ENCODE measurements at regions of chr7 and their contacts with region 1.

Region 1: DNA sequence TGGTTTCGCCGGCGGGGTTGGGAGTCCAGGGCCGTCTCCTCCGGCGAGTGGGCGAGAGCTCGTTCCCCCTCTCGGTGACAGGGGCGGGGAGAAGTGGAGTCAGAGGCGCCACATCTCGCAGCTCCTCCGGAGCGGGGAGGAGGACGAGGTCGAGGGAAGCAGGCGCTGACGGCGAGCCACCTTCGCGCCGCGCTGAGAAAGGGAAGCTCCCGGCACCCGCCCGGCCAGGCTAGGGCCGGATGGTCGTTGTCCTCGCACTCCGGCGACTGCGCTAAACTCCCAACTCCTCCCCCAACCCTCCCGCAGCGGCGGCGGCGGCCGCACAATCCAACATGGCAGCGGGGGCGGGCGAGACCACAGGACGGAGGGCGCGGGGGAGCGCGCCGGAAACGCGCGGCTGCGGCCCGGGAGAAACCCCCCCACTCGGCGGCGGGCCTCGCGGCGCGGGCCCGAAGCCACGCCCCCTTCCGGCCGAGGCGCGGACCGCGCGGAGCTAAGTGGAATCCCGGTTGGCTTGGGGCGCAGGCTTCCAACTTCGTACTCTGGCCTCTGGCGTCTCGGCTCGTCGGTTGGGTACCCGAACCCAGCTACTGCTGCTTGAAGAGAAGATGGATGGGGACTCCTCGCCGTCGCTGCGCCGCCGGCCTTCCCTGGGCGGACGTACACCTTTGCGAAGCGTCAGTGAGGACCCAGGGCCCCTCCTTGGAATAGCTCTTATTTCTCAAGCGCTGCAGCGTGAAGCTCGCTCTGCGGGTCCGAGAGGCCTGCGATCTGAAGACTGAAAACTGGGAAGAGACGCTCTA is at the start of gene WASL:
- DNase-seq: peak; percentile 92
- H3K4me3 Mint-ChIP-seq: peak within 1 kb of the TSS; percentile 95
- H3K27ac Mint-ChIP-seq: peak within 1 kb of the TSS; percentile 95
- H3K4me1 Mint-ChIP-seq: peaks cover 53% of the 10 kb centered on the region
- H3K27me3 Mint-ChIP-seq: no peaks in the 10 kb centered on the region
- total RNA-seq, gene WASL: 5.1 to 5.9 TPM

Region 2: GRCh38 chr7:123557398-123558288 is 191.3 kb before region 1 on chr7 and contains the start of gene NDUFA5:
- CTCF ChIA-PET with region 1: no interaction called
- POLR2A ChIA-PET with region 1: no interaction called
- intact Hi-C with region 1: loop called (anchors 1 kb)
- DNase-seq: peak; percentile 97
- H3K4me3 Mint-ChIP-seq: no peak within 1 kb of the TSS
- H3K27ac Mint-ChIP-seq: no peak within 1 kb of the TSS
- H3K4me1 Mint-ChIP-seq: peaks cover 15% of the 10 kb centered on the region
- H3K27me3 Mint-ChIP-seq: no peaks in the 10 kb centered on the region
- total RNA-seq, gene NDUFA5: 57.8 to 61.0 TPM

Region 3: DNA sequence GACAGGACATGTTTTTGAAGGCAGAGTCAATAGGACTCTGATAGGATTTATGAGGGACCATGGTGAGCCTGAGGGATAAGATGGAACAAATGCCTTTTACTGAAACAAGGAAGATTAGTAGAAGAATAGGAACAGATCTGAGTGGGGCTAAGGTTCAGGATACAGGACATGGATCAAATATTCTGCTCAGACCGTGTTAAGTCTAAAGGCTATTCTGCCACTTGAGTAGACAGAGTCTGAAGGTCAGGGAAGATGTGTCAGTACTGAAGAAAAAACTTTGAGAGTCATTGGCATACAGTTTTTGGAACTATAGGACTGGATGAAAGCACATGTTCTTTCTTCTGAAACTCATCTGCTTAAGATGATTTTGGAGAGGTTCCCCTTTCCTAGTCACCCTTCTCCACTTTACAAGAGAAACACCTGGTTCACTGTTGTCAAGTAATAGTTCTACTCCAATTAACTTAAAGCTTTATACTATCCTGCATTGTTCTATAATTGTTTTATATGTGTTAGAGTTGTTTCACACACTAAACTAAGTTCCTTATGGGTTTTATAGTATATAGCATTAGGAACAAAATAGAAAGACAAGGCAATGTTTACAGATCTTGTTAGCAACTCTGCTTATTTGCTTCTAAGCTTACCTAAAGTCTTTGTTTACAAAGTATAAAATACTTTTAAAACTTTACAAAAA is 43.6 kb before region 1 on chr7:
- CTCF ChIA-PET with region 1: interaction called, 19 read pairs
- POLR2A ChIA-PET with region 1: interaction called, 3 read pairs
- intact Hi-C with region 1: no loop called
- DNase-seq: no peak
- H3K4me3 Mint-ChIP-seq: no peak overlapping the region
- H3K27ac Mint-ChIP-seq: no peak overlapping the region
- H3K4me1 Mint-ChIP-seq: peaks cover 2% of the 10 kb centered on the region
- H3K27me3 Mint-ChIP-seq: no peaks in the 10 kb centered on the region

Region 4: DNA sequence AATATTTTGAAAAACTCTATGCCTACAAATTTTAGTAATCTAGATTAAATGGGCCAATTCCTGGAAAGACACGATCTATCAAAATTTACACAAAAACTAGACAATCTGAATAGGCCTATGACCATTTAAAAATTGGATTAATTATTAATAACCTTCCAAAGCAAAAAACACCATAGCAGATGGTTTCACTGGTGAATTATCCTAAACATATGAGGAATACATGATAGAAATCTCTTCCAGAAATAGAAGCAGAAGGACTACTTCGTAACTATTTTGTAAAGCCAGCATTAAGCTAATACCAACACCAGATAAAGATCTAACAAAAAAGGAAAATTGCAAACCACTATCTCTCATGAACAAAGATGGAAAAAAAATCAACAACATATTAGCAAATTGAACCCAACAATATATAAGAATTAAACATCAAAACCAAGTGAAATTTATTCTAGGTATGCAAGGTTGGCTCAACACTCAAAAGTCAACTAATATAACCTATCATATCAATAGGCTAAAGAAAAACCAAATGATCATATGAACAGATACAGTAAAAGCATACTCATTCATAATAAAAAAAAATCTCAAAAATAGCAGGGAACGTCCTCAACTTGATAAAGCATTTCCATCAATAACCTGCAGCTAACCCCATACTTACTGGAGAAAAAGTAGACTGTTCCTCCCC is 16.4 kb before region 1 on chr7:
- CTCF ChIA-PET with region 1: no interaction called
- POLR2A ChIA-PET with region 1: no interaction called
- intact Hi-C with region 1: no loop called
- DNase-seq: no peak
- H3K4me3 Mint-ChIP-seq: no peak overlapping the region
- H3K27ac Mint-ChIP-seq: no peak overlapping the region
- H3K4me1 Mint-ChIP-seq: peaks cover 36% of the 10 kb centered on the region
- H3K27me3 Mint-ChIP-seq: no peaks in the 10 kb centered on the region

Region 5: GRCh38 chr7:123770378-123770777 is 21.4 kb after region 1 on chr7:
- CTCF ChIA-PET with region 1: interaction called, 3 read pairs
- POLR2A ChIA-PET with region 1: no interaction called
- intact Hi-C with region 1: loop called (anchors 1 kb)
- DNase-seq: peak; percentile 31
- H3K4me3 Mint-ChIP-seq: no peak overlapping the region
- H3K27ac Mint-ChIP-seq: no peak overlapping the region
- H3K4me1 Mint-ChIP-seq: peaks cover 12% of the 10 kb centered on the region
- H3K27me3 Mint-ChIP-seq: peaks cover 25% of the 10 kb centered on the region

Region 6: DNA sequence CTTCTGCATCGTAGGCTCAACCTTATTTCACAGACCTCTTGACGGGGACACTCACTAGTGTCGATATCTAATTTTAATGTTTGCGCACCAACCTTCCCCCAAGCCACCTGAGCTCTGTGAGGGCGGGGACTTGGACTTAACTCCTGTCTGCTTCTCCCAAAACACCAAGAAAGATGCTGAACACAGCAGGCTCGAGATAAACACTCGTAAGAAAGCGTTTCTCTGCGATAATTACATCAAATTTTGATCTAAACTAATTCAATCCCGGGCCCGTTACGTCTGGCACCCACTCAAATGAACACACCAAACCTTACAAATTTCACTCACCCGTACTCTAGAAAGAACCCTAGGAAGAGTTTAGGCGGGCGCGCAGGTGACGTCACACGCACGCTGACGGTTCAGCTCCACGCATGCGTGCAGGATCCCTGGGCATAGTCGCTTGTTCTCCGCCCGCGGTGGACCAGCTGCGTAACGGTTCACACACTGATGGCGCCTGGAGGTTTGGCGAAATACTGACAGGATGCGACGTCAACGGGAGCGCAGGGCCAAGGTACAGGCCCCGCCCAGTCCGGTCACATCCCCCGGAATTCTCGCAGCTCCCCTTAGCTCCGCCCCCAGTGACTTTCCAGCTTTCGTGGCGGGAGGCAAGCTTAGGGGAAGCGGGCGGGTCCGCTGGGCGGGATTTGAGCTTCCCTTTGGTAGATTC is 1180.7 kb after region 1 on chr7 and contains the start of gene POT1:
- CTCF ChIA-PET with region 1: no interaction called
- POLR2A ChIA-PET with region 1: no interaction called
- intact Hi-C with region 1: loop called (anchors 1 kb)
- DNase-seq: peak; percentile 99
- H3K4me3 Mint-ChIP-seq: peak within 1 kb of the TSS; percentile 89
- H3K27ac Mint-ChIP-seq: peak within 1 kb of the TSS; percentile 89
- H3K4me1 Mint-ChIP-seq: peaks cover 48% of the 10 kb centered on the region
- H3K27me3 Mint-ChIP-seq: no peaks in the 10 kb centered on the region
- total RNA-seq, gene POT1: 32.7 to 32.8 TPM